Heart right ventricle (tissue), 16 donors: ENCODE measurements at regions of chr22 and their contacts with region 1.

Region 1: DNA sequence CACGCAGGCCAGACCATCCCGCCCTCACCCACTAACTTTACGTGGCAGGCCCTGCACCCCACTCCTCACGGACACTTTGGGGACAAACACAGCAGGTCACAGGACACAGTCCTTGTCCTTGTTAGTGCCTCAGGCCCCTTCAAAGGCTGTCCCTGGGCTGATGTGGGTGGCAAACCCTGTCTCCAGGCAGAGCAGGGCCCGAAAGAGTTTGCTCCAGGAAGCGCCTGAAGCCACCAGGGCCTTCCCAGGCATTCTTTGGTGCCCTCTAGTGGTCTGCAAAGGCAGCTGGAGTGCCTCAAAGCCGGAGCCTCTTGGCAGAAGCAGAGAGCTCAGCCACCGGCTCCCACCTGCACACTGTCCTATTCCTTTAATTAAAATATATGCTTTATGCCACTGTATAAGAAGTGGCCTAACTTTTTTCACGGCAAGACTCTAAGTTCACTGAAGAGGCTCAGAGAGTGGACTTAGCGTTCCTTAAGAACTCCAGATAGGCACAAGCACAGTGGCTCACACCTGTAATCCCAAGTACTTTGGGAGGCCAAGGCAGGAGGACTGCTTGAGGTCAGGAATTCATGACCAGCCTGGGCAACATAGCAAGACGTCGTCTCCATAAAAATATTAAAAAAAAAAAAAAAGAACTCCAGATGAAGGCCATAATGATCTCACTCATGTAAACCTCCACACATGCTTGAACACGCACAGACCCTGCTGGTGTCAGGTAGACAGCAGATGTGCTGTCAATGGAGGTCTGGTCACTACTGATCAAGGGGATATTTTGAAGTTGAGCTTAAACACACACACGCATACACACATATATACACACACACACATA is 11.1 kb downstream of the TXN2 start:
- DNase-seq: peak; percentile 74 to 87
- ATAC-seq: peak; percentile 61 to 79 (median 74)
- H3K4me3 ChIP-seq: no peak overlapping the region
- H3K27ac ChIP-seq: peak overlapping the region in 9 of 10 donors; percentile 66 to 97 (median 94)
- H3K4me1 ChIP-seq: peaks cover 15 to 79% (median 54%) of the 10 kb centered on the region in 9 donors
- H3K27me3 ChIP-seq: no peaks in the 10 kb centered on the region
- CTCF ChIP-seq: peak in 8 of 9 donors; percentile 92 to 98 (median 97)

Region 2: DNA sequence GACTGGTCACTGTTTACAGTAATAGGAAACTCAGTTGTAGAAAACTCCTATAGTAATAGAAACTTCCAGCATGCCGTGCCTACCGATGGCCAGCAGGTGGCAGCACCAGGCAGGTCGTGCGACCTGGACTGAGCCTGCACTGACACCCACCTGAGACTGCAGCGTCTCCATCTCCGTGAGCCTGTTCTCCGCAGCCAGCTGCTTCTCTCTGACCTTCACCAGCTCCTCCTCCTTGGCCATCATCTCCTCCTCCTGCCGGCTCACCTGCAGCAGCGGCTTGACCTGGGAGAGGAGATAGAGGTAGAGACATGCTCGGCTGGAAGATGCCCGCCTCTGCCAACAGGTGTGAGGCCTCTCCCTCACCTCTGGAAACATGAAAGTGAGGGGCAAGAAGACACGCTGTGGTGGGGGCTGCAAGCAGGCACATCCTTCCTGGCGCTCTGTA is 169.0 kb before region 1 on chr22:
- intact Hi-C with region 1: loop called (anchors 1 to 5 kb)
- DNase-seq: peak; percentile 71 to 78
- ATAC-seq: peak; percentile 50 to 74 (median 59)
- H3K4me3 ChIP-seq: no peak overlapping the region
- H3K27ac ChIP-seq: peak overlapping the region in 5 of 10 donors; percentile 2 to 47 (median 25)
- H3K4me1 ChIP-seq: peaks cover 0 to 7% (median 0%) of the 10 kb centered on the region in 9 donors
- H3K27me3 ChIP-seq: no peaks in the 10 kb centered on the region
- CTCF ChIP-seq: peak; percentile 91 to 98 (median 95)

Region 3: GRCh38 chr22:36395926-36396325 is 74.5 kb before region 1 on chr22:
- intact Hi-C with region 1: no loop called
- DNase-seq: no peak
- ATAC-seq: peak; percentile 20 to 76 (median 44)
- H3K4me3 ChIP-seq: no peak overlapping the region
- H3K27ac ChIP-seq: peak overlapping the region in 5 of 10 donors; percentile 18 to 61 (median 43)
- H3K4me1 ChIP-seq: peaks cover 0 to 64% (median 12%) of the 10 kb centered on the region in 9 donors
- H3K27me3 ChIP-seq: no peaks in the 10 kb centered on the region
- CTCF ChIP-seq: no peak